ENCODE measurements at regions of chr1 and their contacts with region 1.

Region 1: DNA sequence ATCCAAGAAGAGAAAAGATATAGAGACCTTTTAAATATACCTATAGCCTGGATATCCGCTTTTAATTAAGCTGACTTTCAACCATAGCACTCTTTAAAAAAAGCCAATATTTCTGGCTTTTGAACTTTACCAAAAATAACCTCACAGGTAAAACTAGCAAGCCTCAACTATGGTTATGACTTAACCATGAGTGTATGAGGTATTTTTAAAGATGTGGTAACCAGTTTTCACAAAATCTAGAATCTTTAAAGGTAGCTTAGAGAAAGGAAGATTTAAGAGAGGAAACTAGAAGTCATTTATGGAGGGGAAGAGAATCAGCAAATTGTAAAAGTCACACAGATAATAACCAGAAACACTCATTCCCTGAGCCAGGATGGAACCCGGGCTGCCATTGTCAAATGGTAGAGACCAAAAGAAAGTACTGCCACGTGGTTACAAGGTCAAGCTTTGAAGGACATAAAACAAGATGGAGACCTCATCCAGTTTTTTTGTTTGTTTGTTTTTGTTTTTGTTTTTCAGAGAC is 288.4 kb upstream of the RGS18 start:
- H3K4me3 ChIP-seq: no peak overlapping the region
- H3K27ac ChIP-seq: no peak overlapping the region
- H3K4me1 ChIP-seq: no peaks in the 10 kb centered on the region
- CTCF ChIP-seq: no peak

Region 2: GRCh38 chr1:191371626-191372025 is 498.2 kb before region 1 on chr1:
- CTCF ChIA-PET with region 1: no interaction called
- POLR2A ChIA-PET with region 1: interaction called, 11 read pairs
- H3K4me3 ChIP-seq: no peak overlapping the region
- H3K27ac ChIP-seq: no peak overlapping the region
- H3K4me1 ChIP-seq: no peaks in the 10 kb centered on the region
- CTCF ChIP-seq: no peak